ENCODE measurements at regions of chr7 and their contacts with region 1.

Region 1: DNA sequence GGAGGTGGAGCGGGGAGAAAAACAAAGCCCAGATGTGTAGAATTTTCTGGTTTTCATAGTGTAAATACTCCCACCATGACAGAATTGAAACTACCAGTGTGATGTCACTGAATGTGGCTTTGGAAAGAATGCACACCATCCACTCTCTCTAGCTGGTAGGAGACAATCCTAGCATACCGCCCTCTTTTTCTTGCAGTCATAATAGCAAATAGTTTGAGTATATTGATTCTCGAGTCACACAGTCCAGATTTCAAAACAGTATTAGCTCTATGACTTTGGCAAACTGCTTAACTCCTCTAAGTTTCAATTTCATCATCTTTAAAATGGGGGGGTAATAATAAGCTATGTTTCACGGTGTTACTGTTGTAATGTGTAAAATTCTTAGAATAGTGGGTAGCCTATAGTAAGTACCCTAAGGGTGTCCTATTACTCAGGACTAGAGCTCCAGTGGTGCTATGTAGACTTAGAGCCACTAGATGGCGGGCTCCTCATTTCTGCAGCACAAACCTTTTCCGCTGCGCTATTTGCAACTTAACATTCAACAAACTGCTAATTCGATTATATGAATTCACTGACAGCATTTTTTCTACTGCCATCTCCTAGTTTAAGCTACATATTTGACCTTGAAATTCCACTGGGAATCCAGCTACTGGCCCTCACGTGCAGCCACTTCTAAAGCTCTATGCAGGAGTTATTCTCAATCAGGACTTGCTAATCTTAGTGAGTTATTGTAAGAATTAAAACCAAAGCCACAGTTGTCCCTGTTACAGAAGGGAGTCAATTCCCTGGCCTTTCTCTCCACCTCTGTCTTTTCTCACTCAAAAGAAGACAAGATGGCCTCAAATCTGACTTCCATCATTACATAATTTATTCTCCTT is 18.7 kb downstream of the TAS2R40 start:
- DNase-seq: peak; percentile 81
- H3K4me3 Mint-ChIP-seq: peak overlapping the region; percentile 45
- H3K27ac Mint-ChIP-seq: peak overlapping the region; percentile 73
- H3K4me1 Mint-ChIP-seq: peaks cover 30% of the 10 kb centered on the region
- H3K27me3 Mint-ChIP-seq: peaks cover 3% of the 10 kb centered on the region

Region 2: GRCh38 chr7:142445019-142445686 is 795.4 kb before region 1 on chr7:
- CTCF ChIA-PET with region 1: no interaction called
- POLR2A ChIA-PET with region 1: no interaction called
- intact Hi-C with region 1: no loop called
- DNase-seq: peak; percentile 53
- H3K4me3 Mint-ChIP-seq: no peak overlapping the region
- H3K27ac Mint-ChIP-seq: peak overlapping the region; percentile 26
- H3K4me1 Mint-ChIP-seq: peaks cover 31% of the 10 kb centered on the region
- H3K27me3 Mint-ChIP-seq: peaks cover 2% of the 10 kb centered on the region

Region 3: GRCh38 chr7:142711746-142712619 is 528.5 kb before region 1 on chr7:
- CTCF ChIA-PET with region 1: no interaction called
- POLR2A ChIA-PET with region 1: no interaction called
- intact Hi-C with region 1: loop called (anchors 10 kb)
- DNase-seq: peak; percentile 52
- H3K4me3 Mint-ChIP-seq: peak overlapping the region; percentile 79
- H3K27ac Mint-ChIP-seq: peak overlapping the region; percentile 89
- H3K4me1 Mint-ChIP-seq: peaks cover 50% of the 10 kb centered on the region
- H3K27me3 Mint-ChIP-seq: no peaks in the 10 kb centered on the region

Region 4: DNA sequence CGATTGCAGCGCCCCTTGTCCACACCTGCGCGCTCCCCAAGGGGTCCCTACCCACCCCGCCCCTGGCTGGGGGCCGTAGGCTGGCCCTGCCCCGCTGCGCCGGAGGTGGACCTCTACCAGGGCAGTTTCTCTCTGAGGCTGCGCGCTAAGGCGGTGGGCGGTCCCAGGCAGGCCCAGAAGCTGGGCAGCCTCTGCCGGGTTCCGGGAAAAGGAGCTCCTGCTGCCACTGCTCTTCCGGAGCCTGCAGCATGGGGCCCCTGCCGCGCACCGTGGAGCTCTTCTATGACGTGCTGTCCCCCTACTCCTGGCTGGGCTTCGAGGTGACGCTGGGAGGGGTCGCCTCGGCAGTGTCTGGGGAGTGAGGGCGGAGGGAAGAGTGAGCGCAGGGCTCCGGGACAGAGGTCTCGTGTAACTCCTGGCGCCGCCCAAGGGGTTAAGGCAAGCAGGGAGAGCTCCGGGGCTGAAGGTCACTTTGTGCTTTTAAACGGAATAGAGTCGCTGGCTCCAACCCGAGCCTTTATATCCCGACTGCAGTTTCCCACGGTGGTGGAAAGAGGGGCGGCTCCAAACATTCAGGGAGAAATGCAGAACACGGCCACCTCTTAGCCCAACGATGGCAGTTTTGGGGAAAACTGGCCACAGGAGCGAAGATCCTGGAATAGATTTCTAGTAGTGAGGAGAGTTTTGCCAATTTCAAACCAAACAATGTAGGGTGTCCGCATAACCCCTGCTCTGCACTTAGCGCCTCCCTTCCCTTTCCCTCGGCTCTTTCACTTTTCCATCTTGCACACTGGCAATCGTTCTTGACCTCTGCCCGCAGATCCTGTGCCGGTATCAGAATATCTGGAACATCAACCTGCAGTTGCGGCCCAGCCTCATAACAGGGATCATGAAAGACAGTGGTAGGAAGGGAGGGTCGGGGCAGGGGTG is 23.0 kb after region 1 on chr7 and contains the start of gene GSTK1:
- CTCF ChIA-PET with region 1: interaction called, 43 read pairs
- POLR2A ChIA-PET with region 1: interaction called, 8 read pairs
- intact Hi-C with region 1: loop called (anchors 1 kb)
- DNase-seq: peak; percentile 90
- H3K4me3 Mint-ChIP-seq: peak within 1 kb of the TSS; percentile 91
- H3K27ac Mint-ChIP-seq: peak within 1 kb of the TSS; percentile 92
- H3K4me1 Mint-ChIP-seq: peaks cover 60% of the 10 kb centered on the region
- H3K27me3 Mint-ChIP-seq: no peaks in the 10 kb centered on the region
- total RNA-seq, gene GSTK1: 218 to 224 TPM

Region 5: GRCh38 chr7:143299840-143300239 is 59.3 kb after region 1 on chr7:
- CTCF ChIA-PET with region 1: interaction called, 123 read pairs
- POLR2A ChIA-PET with region 1: interaction called, 4 read pairs
- intact Hi-C with region 1: loop called (anchors 1 kb)
- DNase-seq: peak; percentile 68
- H3K4me3 Mint-ChIP-seq: no peak overlapping the region
- H3K27ac Mint-ChIP-seq: no peak overlapping the region
- H3K4me1 Mint-ChIP-seq: peaks cover 50% of the 10 kb centered on the region
- H3K27me3 Mint-ChIP-seq: no peaks in the 10 kb centered on the region

Region 6: DNA sequence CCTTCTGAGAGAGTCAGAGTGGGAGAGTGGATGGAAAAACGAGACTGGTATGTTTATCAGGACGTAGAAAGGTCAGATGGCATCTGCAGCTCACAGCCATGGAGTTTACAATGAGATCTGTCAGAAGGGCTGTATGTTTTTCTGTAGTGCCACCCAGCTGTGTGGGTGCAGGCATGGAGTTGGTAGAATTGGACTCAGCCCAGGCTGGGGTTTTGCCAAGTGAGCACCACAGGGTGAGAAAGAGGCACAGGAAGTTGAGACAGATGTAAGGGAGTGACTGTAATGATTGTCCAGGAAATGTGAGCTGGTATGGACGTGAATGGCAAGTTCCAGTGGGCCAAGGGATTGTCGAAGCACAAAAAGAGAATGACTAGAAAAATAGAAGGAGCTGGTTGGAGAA is 131.5 kb after region 1 on chr7:
- CTCF ChIA-PET with region 1: interaction called, 15 read pairs
- POLR2A ChIA-PET with region 1: interaction called, 3 read pairs
- intact Hi-C with region 1: loop called (anchors 1 kb)
- DNase-seq: peak; percentile 88
- H3K4me3 Mint-ChIP-seq: peak overlapping the region; percentile 7
- H3K27ac Mint-ChIP-seq: peak overlapping the region; percentile 70
- H3K4me1 Mint-ChIP-seq: peaks cover 51% of the 10 kb centered on the region
- H3K27me3 Mint-ChIP-seq: no peaks in the 10 kb centered on the region

Region 7: GRCh38 chr7:143416565-143417149 is 176.1 kb after region 1 on chr7:
- CTCF ChIA-PET with region 1: interaction called, 64 read pairs
- POLR2A ChIA-PET with region 1: interaction called, 3 read pairs
- intact Hi-C with region 1: loop called (anchors 1 kb)
- DNase-seq: no peak
- H3K4me3 Mint-ChIP-seq: no peak overlapping the region
- H3K27ac Mint-ChIP-seq: no peak overlapping the region
- H3K4me1 Mint-ChIP-seq: peaks cover 6% of the 10 kb centered on the region
- H3K27me3 Mint-ChIP-seq: no peaks in the 10 kb centered on the region